T-cell (primary cell): ENCODE measurements at regions of chr18 and their contacts with region 1.

Region 1: DNA sequence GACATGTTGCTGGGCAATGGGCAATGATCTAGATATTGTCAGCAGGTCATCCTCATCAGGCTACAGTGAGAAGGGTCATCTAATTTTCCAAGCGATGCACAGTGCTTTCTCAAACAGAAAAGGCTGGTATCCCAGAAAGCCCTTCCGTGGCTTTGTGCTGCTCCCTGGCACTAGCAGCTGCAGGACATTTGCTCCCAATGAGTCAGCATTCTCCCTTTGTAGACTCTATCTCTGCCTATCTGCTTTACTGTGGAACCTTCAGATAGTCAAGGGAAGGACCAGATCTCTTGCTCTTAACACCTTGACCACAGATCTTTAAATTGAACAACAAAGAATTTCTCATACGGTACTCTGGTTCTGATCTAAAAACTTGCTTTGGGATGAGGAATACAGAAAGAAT is 101.4 kb downstream of the CDH2 start:
- DNase-seq: no peak
- ATAC-seq: no peak
- H3K4me3 ChIP-seq: no peak overlapping the region
- H3K4me3 Mint-ChIP-seq: no peak overlapping the region
- H3K27ac ChIP-seq: no peak overlapping the region
- H3K27ac Mint-ChIP-seq: no peak overlapping the region
- H3K4me1 ChIP-seq: no peaks in the 10 kb centered on the region
- H3K4me1 Mint-ChIP-seq: no peaks in the 10 kb centered on the region
- H3K27me3 ChIP-seq: no peaks in the 10 kb centered on the region
- H3K27me3 Mint-ChIP-seq: no peaks in the 10 kb centered on the region

Region 2: GRCh38 chr18:28059861-28060260 is 15.6 kb before region 1 on chr18:
- CTCF ChIA-PET with region 1: no interaction called
- POLR2A ChIA-PET with region 1: interaction called in 1 of 2 experiments, 11 read pairs
- DNase-seq: no peak
- ATAC-seq: no peak
- H3K4me3 ChIP-seq: no peak overlapping the region
- H3K4me3 Mint-ChIP-seq: no peak overlapping the region
- H3K27ac ChIP-seq: no peak overlapping the region
- H3K27ac Mint-ChIP-seq: no peak overlapping the region
- H3K4me1 ChIP-seq: no peaks in the 10 kb centered on the region
- H3K4me1 Mint-ChIP-seq: no peaks in the 10 kb centered on the region
- H3K27me3 ChIP-seq: no peaks in the 10 kb centered on the region
- H3K27me3 Mint-ChIP-seq: no peaks in the 10 kb centered on the region

Region 3: GRCh38 chr18:28086670-28087552 is 11.4 kb after region 1 on chr18:
- CTCF ChIA-PET with region 1: no interaction called
- POLR2A ChIA-PET with region 1: no interaction called
- DNase-seq: no peak
- ATAC-seq: no peak
- H3K4me3 ChIP-seq: no peak overlapping the region
- H3K4me3 Mint-ChIP-seq: no peak overlapping the region
- H3K27ac ChIP-seq: no peak overlapping the region
- H3K27ac Mint-ChIP-seq: no peak overlapping the region
- H3K4me1 ChIP-seq: no peaks in the 10 kb centered on the region
- H3K4me1 Mint-ChIP-seq: no peaks in the 10 kb centered on the region
- H3K27me3 ChIP-seq: no peaks in the 10 kb centered on the region
- H3K27me3 Mint-ChIP-seq: no peaks in the 10 kb centered on the region